ENCODE measurements at regions of chr1 and their contacts with region 1.

Region 1: DNA sequence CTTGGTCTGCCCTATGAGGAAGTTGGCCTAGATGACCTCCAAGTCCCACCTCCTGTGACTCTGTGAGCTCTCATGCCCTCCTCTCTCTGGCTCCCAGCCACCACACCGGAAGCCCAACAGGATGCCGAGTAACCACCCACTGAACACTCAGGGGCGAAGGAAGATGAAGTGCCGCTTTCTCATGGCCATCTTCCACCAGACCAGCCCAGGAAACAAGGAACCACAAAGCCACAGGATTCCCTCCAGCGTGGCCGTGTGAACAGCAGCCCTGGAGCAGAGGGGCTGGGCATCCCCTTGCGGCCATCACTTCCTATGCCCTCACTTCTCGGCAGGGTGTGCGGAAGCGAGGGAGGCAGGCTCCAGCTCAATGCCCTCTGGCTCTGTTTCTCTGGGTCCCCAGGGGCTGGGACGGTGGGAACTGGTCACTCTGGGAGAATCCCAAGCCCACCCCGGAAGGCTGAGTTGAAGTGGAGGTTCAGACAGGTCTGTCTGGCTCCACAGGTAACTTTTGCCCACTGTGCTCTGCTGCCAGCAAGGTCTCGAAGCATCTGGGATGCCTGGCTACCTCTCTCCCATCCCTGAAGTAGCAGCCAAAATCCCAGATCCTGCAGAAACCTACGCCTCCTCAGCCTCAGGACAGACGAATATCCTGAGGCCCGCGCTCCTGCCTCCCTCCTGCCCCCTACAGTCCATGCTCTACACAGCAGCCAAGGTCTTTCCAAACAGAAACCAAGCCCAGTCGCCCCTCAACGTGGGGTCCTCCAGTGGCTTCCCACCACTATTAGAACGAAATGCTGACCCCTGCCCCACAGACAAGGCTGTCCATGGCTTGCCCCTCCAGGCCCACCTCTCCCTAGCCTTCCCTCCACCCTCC is 44.2 kb upstream of the ECE1 start:
- DNase-seq: peak; percentile 67
- ATAC-seq: peak; percentile 83
- H3K4me3 Mint-ChIP-seq: peak overlapping the region; percentile 87
- H3K27ac Mint-ChIP-seq: peak overlapping the region; percentile 94
- H3K4me1 Mint-ChIP-seq: peaks cover 89% of the 10 kb centered on the region
- H3K27me3 Mint-ChIP-seq: no peaks in the 10 kb centered on the region
- CTCF ChIP-seq: no peak

Region 2: GRCh38 chr1:21012937-21013336 is 321.5 kb before region 1 on chr1:
- CTCF ChIA-PET with region 1: no interaction called
- POLR2A ChIA-PET with region 1: no interaction called
- intact Hi-C with region 1: no loop called
- DNase-seq: no peak
- ATAC-seq: no peak
- H3K4me3 Mint-ChIP-seq: no peak overlapping the region
- H3K27ac Mint-ChIP-seq: no peak overlapping the region
- H3K4me1 Mint-ChIP-seq: peaks cover 11% of the 10 kb centered on the region
- H3K27me3 Mint-ChIP-seq: no peaks in the 10 kb centered on the region
- CTCF ChIP-seq: no peak

Region 3: GRCh38 chr1:21344750-21345443 is 10.4 kb after region 1 on chr1:
- CTCF ChIA-PET with region 1: interaction called, 5 read pairs
- POLR2A ChIA-PET with region 1: interaction called, 37 read pairs
- intact Hi-C with region 1: loop called (anchors 1 kb)
- DNase-seq: peak; percentile 36
- ATAC-seq: peak; percentile 22
- H3K4me3 Mint-ChIP-seq: peak overlapping the region; percentile 92
- H3K27ac Mint-ChIP-seq: peak overlapping the region; percentile 77
- H3K4me1 Mint-ChIP-seq: peaks cover 43% of the 10 kb centered on the region
- H3K27me3 Mint-ChIP-seq: no peaks in the 10 kb centered on the region
- CTCF ChIP-seq: no peak

Region 4: DNA sequence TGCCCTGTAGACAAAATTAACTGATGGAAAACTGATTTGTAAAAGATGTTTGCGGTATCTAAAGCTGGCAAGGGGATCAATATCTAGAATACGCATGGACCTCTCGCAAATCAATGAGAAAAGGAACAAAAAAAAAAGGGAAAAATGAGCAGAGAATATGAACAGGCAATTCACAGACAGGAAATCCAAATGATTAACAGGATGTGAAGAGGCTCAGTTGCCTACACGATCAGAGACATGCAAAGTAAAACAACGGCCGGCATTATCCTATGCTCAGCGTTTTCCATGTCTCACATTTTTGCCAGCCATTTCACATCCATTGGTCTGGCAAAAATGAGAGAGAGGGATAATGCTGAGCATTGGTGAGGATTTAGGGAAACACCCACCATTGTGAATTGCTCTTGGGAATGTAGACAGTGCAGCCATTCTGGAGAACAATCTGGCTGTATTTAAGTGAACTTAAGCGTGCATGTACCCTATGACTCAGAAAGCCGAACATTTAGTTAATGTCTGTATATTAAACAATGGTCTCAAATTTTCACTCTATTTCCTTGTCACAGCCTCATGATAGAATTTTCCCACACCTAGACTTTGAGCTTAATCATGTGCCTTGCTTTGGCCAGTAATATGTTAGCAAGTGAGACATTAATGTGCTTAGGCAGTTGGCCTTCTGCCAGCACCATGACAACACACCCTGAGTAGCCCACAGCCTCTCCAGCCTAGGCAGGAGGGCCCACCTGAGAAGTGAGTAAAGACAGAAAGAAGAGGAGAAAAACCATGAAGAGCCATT is 44.4 kb after region 1 on chr1:
- CTCF ChIA-PET with region 1: no interaction called
- POLR2A ChIA-PET with region 1: no interaction called
- intact Hi-C with region 1: no loop called
- DNase-seq: no peak
- ATAC-seq: no peak
- H3K4me3 Mint-ChIP-seq: no peak overlapping the region
- H3K27ac Mint-ChIP-seq: no peak overlapping the region
- H3K4me1 Mint-ChIP-seq: peaks cover 5% of the 10 kb centered on the region
- H3K27me3 Mint-ChIP-seq: peaks cover 15% of the 10 kb centered on the region
- CTCF ChIP-seq: no peak

Region 5: GRCh38 chr1:21564521-21565095 is 230.2 kb after region 1 on chr1:
- CTCF ChIA-PET with region 1: no interaction called
- POLR2A ChIA-PET with region 1: no interaction called
- intact Hi-C with region 1: no loop called
- DNase-seq: no peak
- ATAC-seq: no peak
- H3K4me3 Mint-ChIP-seq: no peak overlapping the region
- H3K27ac Mint-ChIP-seq: no peak overlapping the region
- H3K4me1 Mint-ChIP-seq: no peaks in the 10 kb centered on the region
- H3K27me3 Mint-ChIP-seq: no peaks in the 10 kb centered on the region
- CTCF ChIP-seq: no peak